Dorsolateral prefrontal cortex (tissue), 120 donors: ENCODE measurements at regions of chr9 and their contacts with region 1.

Region 1: DNA sequence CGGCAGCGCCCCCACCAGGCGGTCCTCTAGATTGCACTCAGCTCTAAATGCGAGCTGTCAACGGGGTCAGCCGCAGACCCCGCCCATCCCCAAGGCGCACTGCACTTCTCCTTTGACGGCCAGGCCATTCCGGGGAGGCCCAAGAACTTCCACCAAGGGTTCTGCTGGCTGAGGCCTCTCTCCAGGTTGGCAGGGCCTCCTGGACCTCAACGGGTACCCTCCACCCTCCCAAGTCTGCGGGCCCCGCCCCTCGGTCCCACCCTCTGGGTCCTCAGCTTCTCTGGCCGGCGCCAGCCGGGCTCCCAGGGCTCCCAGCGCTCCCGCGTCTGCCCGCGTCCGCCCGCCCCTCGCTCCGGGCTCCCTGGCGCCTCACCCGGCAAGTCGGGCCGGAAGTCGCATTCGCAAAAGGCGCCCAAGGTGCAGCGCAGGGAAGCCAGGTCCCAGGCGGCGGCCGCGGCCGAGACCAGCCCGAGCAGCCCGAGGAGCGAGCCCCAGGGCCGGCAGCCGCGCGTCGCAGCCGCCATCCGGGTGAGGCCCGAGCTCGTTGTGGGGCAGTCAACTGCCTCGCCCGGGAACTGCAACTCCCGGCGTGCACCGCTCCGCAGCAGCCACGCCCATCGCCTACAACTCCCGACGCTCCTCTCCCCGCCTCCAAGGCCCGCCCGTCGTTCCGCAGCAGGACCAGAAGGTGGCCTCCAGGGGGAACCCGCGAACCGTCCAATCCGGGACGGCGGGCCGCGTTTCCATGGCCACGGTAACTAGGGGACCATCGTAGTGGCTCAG is at the start of gene TOR2A:
- DNase-seq: peak; percentile 92 to 99 (median 97)
- H3K4me3 ChIP-seq: peak within 1 kb of the TSS; percentile 62 to 94 (median 83)
- H3K27ac ChIP-seq: peak within 1 kb of the TSS; percentile 78 to 98 (median 95)
- H3K27me3 ChIP-seq: no peaks in the 10 kb centered on the region
- CTCF ChIP-seq: peak; percentile 79 to 99 (median 93)
- total RNA-seq, gene TOR2A: 7.7 to 18.6 (median 12.5) TPM

Region 2: GRCh38 chr9:127503947-127504782 is 230.8 kb before region 1 on chr9:
- intact Hi-C with region 1: loop called (anchors 5 to 10 kb)
- DNase-seq: peak; percentile 66 to 86 (median 83)
- H3K4me3 ChIP-seq: no peak overlapping the region
- H3K27ac ChIP-seq: peak overlapping the region in 8 of 59 donors; percentile 3 to 53 (median 31)
- H3K27me3 ChIP-seq: no peaks in the 10 kb centered on the region
- CTCF ChIP-seq: peak; percentile 61 to 95 (median 87)

Region 3: DNA sequence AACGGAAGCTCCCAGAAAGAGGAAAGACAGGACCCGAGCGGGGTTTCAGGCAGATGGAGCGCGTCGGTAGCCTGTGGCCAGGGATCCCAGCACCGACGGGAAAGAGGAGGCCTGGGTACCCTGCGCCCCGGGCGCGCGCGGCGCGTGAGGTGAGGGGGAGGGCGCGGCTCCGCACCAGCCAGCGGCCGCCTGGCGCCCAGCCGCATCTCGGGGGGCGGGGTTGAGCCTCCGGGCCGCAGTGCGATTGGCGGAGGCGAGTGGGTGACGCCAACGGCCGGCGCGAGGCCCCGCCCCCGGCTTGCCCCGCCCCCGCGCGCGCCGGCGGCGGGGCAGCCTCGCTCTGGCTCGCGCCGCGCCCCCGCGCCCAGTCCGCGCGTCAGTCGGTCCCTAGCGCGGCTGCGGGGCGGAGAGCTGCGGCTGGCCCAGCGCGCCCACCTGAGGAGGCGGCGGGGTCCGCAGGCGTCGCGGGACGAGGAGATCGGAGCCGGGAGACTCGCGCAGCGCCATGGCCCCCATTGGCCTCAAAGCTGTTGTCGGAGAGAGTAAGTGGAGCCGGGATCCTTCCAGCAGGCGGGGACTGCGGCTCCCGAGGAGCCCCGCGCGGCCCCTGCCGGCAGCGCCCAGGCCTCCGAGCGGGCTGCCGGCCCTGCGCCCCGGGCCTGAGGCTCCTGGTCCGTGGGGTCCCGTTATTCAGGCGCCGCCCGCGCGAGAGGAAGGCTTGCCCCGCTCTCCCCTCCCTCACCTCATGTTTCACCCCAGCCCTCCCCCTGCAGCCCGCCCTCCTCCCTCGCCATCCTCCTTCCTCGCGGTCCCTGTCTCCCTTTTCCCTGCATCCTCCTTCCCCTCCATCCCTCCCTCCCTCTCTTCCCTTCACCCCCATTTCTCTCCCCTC is 122.8 kb before region 1 on chr9 and contains the start of gene STXBP1:
- intact Hi-C with region 1: loop called in 1 of 2 experiments (anchors 5 kb)
- DNase-seq: peak; percentile 79 to 97 (median 90)
- H3K4me3 ChIP-seq: peak within 1 kb of the TSS; percentile 75 to 98 (median 93)
- H3K27ac ChIP-seq: peak within 1 kb of the TSS; percentile 68 to 98 (median 92)
- H3K27me3 ChIP-seq: no peaks in the 10 kb centered on the region
- CTCF ChIP-seq: peak in 13 of 56 donors; percentile 6 to 30 (median 17)
- total RNA-seq, gene STXBP1: 334 to 1,348 (median 969) TPM

Region 4: GRCh38 chr9:127785023-127785932 is 50.3 kb after region 1 on chr9:
- intact Hi-C with region 1: loop called (anchors 1 kb)
- DNase-seq: peak; percentile 76 to 90 (median 80)
- H3K4me3 ChIP-seq: peak overlapping the region; percentile 37 to 100 (median 96)
- H3K27ac ChIP-seq: peak overlapping the region; percentile 52 to 98 (median 93)
- H3K27me3 ChIP-seq: no peaks in the 10 kb centered on the region
- CTCF ChIP-seq: peak; percentile 50 to 97 (median 88)

Region 5: GRCh38 chr9:127916665-127917613 is 182.0 kb after region 1 on chr9 and contains the start of gene ST6GALNAC4:
- intact Hi-C with region 1: loop called (anchors 1 to 5 kb)
- DNase-seq: peak; percentile 88 to 96 (median 93)
- H3K4me3 ChIP-seq: peak within 1 kb of the TSS; percentile 54 to 92 (median 80)
- H3K27ac ChIP-seq: peak within 1 kb of the TSS in 55 of 59 donors; percentile 6 to 88 (median 77)
- H3K27me3 ChIP-seq: no peaks in the 10 kb centered on the region
- CTCF ChIP-seq: peak in 9 of 56 donors; percentile 10 to 43 (median 23)
- total RNA-seq, gene ST6GALNAC4: 13.2 to 58.0 (median 23.6) TPM